Heart right ventricle (tissue), 16 donors: ENCODE measurements at regions of chr22 and their contacts with region 1.

Region 1: GRCh38 chr22:22463855-22464540 is 44.5 kb downstream of the ZNF280B start:
- DNase-seq: peak in 1 of 2 donors; percentile 51
- ATAC-seq: peak in 5 of 8 donors; percentile 55 to 68 (median 60)
- H3K4me3 ChIP-seq: no peak overlapping the region
- H3K27ac ChIP-seq: no peak overlapping the region
- H3K4me1 ChIP-seq: no peaks in the 10 kb centered on the region
- H3K27me3 ChIP-seq: peaks cover 0 to 67% (median 50%) of the 10 kb centered on the region in 7 donors
- CTCF ChIP-seq: peak; percentile 61 to 85 (median 72)

Region 2: DNA sequence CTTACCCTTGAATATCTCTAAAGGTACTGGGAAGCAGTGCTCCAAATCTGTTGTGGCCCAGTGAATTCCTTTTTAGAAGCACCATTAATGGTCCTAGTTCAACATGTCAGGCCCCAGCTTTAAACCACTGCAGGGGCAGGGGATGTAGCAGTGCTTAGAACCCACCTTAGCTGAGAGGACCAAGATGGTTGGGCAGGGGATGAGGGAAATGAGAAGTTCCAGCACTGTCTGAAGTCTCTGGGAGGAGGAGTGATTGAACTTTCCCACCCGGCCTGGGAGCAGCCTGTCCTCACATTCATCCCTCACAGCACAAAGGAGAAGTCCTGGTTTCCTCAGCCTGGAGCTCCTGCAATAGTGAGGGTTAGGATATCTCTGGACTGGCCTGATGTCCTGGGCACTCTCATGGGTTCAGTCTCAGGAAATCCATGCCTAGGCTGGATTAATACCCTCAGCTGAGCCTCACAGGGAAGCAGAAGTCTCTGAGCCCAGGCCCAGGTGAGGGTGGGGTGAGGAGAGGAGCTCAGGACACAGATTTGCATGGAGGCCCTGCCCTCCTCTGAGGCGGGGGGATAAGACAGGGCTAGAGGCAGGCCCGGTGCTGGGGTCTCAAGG is 123.7 kb after region 1 on chr22:
- intact Hi-C with region 1: loop called in 1 of 10 experiments (anchors 10 kb)
- DNase-seq: no peak
- ATAC-seq: no peak
- H3K4me3 ChIP-seq: no peak overlapping the region
- H3K27ac ChIP-seq: no peak overlapping the region
- H3K4me1 ChIP-seq: no peaks in the 10 kb centered on the region
- H3K27me3 ChIP-seq: peaks cover 0 to 50% (median 14%) of the 10 kb centered on the region in 7 donors
- CTCF ChIP-seq: no peak